MCF 10A (cell line): ENCODE measurements at regions of chr5 and their contacts with region 1.

Region 1: GRCh38 chr5:141524604-141525597 is 36.0 kb downstream of the PCDHGC5 start:
- DNase-seq: peak; percentile 97
- H3K4me3 Mint-ChIP-seq: no peak overlapping the region
- H3K27ac Mint-ChIP-seq: peak overlapping the region; percentile 60
- H3K4me1 Mint-ChIP-seq: peaks cover 45% of the 10 kb centered on the region
- H3K27me3 Mint-ChIP-seq: no peaks in the 10 kb centered on the region
- CTCF ChIP-seq: peak; percentile 100

Region 2: GRCh38 chr5:141199359-141200235 is 325.3 kb before region 1 on chr5 and contains the start of gene PCDHB11:
- CTCF ChIA-PET with region 1: interaction called, 12 read pairs
- POLR2A ChIA-PET with region 1: interaction called, 4 read pairs
- intact Hi-C with region 1: no loop called
- DNase-seq: peak; percentile 32
- H3K4me3 Mint-ChIP-seq: peak within 1 kb of the TSS; percentile 61
- H3K27ac Mint-ChIP-seq: no peak within 1 kb of the TSS
- H3K4me1 Mint-ChIP-seq: no peaks in the 10 kb centered on the region
- H3K27me3 Mint-ChIP-seq: no peaks in the 10 kb centered on the region
- CTCF ChIP-seq: peak; percentile 40
- total RNA-seq, gene PCDHB11: 0.75 and 1.3 TPM in 2 replicates

Region 3: DNA sequence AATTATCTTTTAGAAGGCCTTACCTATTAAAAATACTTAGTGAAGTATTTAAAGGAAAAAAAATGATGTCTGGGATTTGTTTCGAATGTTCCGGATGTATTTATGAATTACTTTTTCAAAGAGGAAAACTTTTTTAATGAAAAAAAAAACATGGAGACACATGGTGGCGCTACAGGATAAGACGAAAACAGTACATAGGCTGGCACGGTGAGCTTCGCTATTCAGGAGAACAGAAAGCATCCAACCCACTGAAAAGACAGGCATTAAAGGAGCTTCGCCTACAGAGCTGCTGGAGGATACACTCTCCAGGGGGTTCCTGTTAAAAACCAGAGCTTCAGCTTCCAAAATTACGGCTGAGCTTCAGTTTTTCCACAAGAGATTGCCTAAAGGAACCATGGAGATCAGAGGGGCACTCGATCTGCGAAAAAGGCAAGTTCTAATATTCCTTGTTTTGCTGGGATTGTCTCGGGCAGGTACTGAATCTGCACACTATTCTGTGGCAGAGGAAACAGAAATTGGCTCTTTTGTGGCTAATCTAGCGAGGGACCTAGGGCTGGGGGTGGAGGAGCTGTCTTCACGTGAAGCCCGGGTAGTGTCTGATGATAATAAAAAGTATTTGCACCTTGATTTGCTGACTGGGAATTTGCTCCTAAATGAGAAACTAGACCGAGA is 301.7 kb before region 1 on chr5 and contains the start of gene PCDHB14:
- CTCF ChIA-PET with region 1: interaction called, 59 read pairs
- POLR2A ChIA-PET with region 1: interaction called, 14 read pairs
- intact Hi-C with region 1: loop called (anchors 1 kb)
- DNase-seq: peak; percentile 79
- H3K4me3 Mint-ChIP-seq: peak within 1 kb of the TSS; percentile 84
- H3K27ac Mint-ChIP-seq: peak within 1 kb of the TSS; percentile 60
- H3K4me1 Mint-ChIP-seq: no peaks in the 10 kb centered on the region
- H3K27me3 Mint-ChIP-seq: no peaks in the 10 kb centered on the region
- CTCF ChIP-seq: peak; percentile 69
- total RNA-seq, gene PCDHB14: 4.7 and 6.2 TPM in 2 replicates

Region 4: GRCh38 chr5:141387233-141387949 is 137.5 kb before region 1 on chr5 and contains the start of gene PCDHGB4:
- CTCF ChIA-PET with region 1: interaction called, 13 read pairs
- POLR2A ChIA-PET with region 1: interaction called, 3 read pairs
- intact Hi-C with region 1: no loop called
- DNase-seq: no peak
- H3K4me3 Mint-ChIP-seq: no peak within 1 kb of the TSS
- H3K27ac Mint-ChIP-seq: no peak within 1 kb of the TSS
- H3K4me1 Mint-ChIP-seq: no peaks in the 10 kb centered on the region
- H3K27me3 Mint-ChIP-seq: no peaks in the 10 kb centered on the region
- CTCF ChIP-seq: no peak
- total RNA-seq, gene PCDHGB4: 0.49 and 0.79 TPM in 2 replicates

Region 5: DNA sequence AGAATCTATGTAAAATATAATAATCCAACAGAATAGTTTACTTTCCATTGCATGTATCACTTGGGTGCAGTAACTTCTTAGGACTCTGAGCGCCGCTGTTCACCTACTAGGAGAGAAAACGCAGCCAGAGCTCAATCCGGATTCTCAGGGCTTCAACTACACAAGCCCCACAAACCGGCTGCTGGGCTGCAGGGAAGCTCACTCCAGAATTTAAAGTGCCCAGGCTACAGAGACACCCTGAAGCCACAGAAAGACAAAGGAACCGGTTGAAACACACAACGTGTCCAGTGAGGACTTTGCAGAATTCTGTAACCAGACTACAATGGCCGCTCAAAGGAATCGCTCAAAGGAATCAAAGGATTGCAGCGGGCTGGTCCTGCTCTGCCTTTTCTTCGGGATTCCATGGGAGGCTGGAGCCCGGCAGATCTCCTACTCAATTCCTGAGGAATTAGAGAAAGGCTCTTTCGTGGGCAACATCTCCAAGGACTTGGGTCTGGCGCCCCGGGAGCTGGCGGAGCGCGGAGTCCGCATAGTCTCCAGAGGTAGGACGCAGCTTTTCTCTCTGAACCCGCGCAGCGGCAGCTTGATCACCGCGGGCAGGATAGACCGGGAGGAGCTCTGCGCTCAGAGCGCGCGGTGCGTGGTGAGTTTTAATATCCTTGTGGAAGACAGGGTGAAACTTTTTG is 111.9 kb before region 1 on chr5 and contains the start of gene PCDHGA10:
- CTCF ChIA-PET with region 1: interaction called, 37 read pairs
- POLR2A ChIA-PET with region 1: interaction called, 5 read pairs
- intact Hi-C with region 1: loop called (anchors 1 kb)
- DNase-seq: peak; percentile 83
- H3K4me3 Mint-ChIP-seq: peak within 1 kb of the TSS; percentile 54
- H3K27ac Mint-ChIP-seq: no peak within 1 kb of the TSS
- H3K4me1 Mint-ChIP-seq: no peaks in the 10 kb centered on the region
- H3K27me3 Mint-ChIP-seq: no peaks in the 10 kb centered on the region
- CTCF ChIP-seq: peak; percentile 67
- total RNA-seq, gene PCDHGA10: 1.4 TPM in 2 replicates

Region 6: GRCh38 chr5:141430332-141431113 is 94.4 kb before region 1 on chr5 and contains the start of gene PCDHGA12:
- CTCF ChIA-PET with region 1: no interaction called
- POLR2A ChIA-PET with region 1: no interaction called
- intact Hi-C with region 1: loop called (anchors 1 kb)
- DNase-seq: peak; percentile 89
- H3K4me3 Mint-ChIP-seq: peak within 1 kb of the TSS; percentile 19
- H3K27ac Mint-ChIP-seq: no peak within 1 kb of the TSS
- H3K4me1 Mint-ChIP-seq: no peaks in the 10 kb centered on the region
- H3K27me3 Mint-ChIP-seq: no peaks in the 10 kb centered on the region
- CTCF ChIP-seq: peak; percentile 30
- total RNA-seq, gene PCDHGA12: 0.79 and 0.91 TPM in 2 replicates

Region 7: GRCh38 chr5:141512390-141512910 is 12.5 kb before region 1 on chr5:
- CTCF ChIA-PET with region 1: interaction called, 191 read pairs
- POLR2A ChIA-PET with region 1: interaction called, 25 read pairs
- intact Hi-C with region 1: loop called (anchors 1 kb)
- DNase-seq: peak; percentile 81
- H3K4me3 Mint-ChIP-seq: no peak overlapping the region
- H3K27ac Mint-ChIP-seq: peak overlapping the region; percentile 81
- H3K4me1 Mint-ChIP-seq: peaks cover 58% of the 10 kb centered on the region
- H3K27me3 Mint-ChIP-seq: no peaks in the 10 kb centered on the region
- CTCF ChIP-seq: peak; percentile 98

Region 8: DNA sequence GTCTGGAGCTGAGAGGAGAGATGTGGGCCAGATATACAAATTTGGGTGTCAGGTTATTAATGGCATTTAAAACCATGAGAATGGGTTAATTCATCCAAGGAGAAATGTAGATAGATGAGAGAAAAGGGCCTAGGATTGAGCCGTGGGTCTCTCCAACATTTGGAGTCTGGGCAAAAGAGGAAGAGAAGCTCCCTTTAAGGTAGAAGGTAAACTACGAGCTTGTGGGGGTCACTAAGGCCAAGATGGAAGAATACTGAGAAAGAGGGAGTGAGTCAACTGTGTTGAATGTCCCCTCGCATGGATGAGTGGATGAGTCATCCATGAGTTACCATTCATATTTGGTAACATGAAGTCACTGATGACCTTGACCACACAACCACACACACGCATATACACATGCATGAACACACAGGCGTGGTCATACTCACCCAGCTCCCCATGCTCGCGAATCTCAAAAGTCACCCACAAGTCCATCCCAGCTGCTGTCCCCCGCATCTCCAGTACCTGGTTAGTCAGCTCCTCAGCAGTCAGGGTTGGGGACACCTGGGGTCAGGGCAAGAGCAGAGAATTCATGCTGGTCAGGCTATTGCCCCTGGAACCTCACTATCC is 133.1 kb after region 1 on chr5:
- CTCF ChIA-PET with region 1: no interaction called
- POLR2A ChIA-PET with region 1: no interaction called
- intact Hi-C with region 1: no loop called
- DNase-seq: peak; percentile 79
- H3K4me3 Mint-ChIP-seq: no peak overlapping the region
- H3K27ac Mint-ChIP-seq: no peak overlapping the region
- H3K4me1 Mint-ChIP-seq: peaks cover 7% of the 10 kb centered on the region
- H3K27me3 Mint-ChIP-seq: no peaks in the 10 kb centered on the region
- CTCF ChIP-seq: no peak

Region 9: GRCh38 chr5:141701360-141702119 is 176.6 kb after region 1 on chr5:
- CTCF ChIA-PET with region 1: no interaction called
- POLR2A ChIA-PET with region 1: no interaction called
- intact Hi-C with region 1: no loop called
- DNase-seq: no peak
- H3K4me3 Mint-ChIP-seq: no peak overlapping the region
- H3K27ac Mint-ChIP-seq: no peak overlapping the region
- H3K4me1 Mint-ChIP-seq: no peaks in the 10 kb centered on the region
- H3K27me3 Mint-ChIP-seq: peaks cover 19% of the 10 kb centered on the region
- CTCF ChIP-seq: no peak